A549 (cell line): ENCODE measurements at regions of chr7 and their contacts with region 1.

Region 1: GRCh38 chr7:76201730-76202665 is at the start of gene SRRM3:
- DNase-seq: peak in 1 of 2 experiments; percentile 84
- ATAC-seq: peak; percentile 83 to 89
- H3K4me3 ChIP-seq: peak within 1 kb of the TSS; percentile 42
- H3K27ac ChIP-seq: peak within 1 kb of the TSS; percentile 42 to 80; a peak in 4 of 6 replicates
- H3K4me1 ChIP-seq: 0 out of 3 replicates have a peak, but pooled peaks cover 3% of the 10 kb centered on the region
- CTCF ChIP-seq: peak; percentile 73
- EP300 ChIP-seq: no peak
- POLR2A ChIP-seq: no peak
- RAD21 ChIP-seq: peak in 1 of 2 experiments; percentile 41; a peak in 2 of 5 replicates
- polyA plus RNA-seq, gene SRRM3: 2.4 and 3.0 TPM in 2 replicates

Region 2: GRCh38 chr7:76185187-76185896 is 16.7 kb before region 1 on chr7:
- CTCF ChIA-PET with region 1: interaction called, 27 read pairs
- POLR2A ChIA-PET with region 1: no interaction called
- DNase-seq: no peak
- ATAC-seq: no peak
- H3K4me3 ChIP-seq: no peak overlapping the region
- H3K27ac ChIP-seq: no peak overlapping the region
- H3K4me1 ChIP-seq: no peaks in the 10 kb centered on the region
- CTCF ChIP-seq: no peak
- EP300 ChIP-seq: no peak
- POLR2A ChIP-seq: no peak
- RAD21 ChIP-seq: no peak

Region 3: DNA sequence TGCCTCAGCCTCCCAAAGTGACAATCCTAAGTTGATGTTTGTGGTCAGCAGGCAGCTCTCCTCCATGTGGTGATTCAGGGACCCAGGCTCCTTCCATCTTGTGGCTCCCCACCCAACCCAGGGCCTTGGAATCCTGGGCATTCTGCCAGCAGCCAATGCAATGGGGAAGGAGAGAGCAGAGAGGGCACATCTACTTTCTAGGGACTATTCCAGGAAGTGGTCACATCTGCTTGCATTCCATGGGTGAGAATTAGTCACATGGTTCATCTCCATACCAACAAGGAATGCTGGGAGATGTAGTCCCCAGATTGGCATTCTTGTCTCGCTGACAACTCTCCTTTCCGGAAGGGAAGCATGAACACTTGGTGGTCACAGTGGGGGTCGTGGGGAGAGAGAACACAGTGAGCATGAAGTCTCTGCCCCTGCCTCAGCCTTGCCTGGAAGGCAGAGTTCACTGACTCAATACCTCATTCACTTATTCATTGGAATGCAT is 10.2 kb before region 1 on chr7:
- CTCF ChIA-PET with region 1: interaction called, 27 read pairs
- POLR2A ChIA-PET with region 1: no interaction called
- DNase-seq: peak in 1 of 2 experiments; percentile 76
- ATAC-seq: peak; percentile 47 to 84; a peak in 3 of 6 replicates
- H3K4me3 ChIP-seq: no peak overlapping the region
- H3K27ac ChIP-seq: no peak overlapping the region
- H3K4me1 ChIP-seq: no peaks in the 10 kb centered on the region
- CTCF ChIP-seq: no peak
- EP300 ChIP-seq: no peak
- POLR2A ChIP-seq: no peak
- RAD21 ChIP-seq: no peak

Region 4: GRCh38 chr7:76220185-76221057 is 18.4 kb after region 1 on chr7:
- CTCF ChIA-PET with region 1: interaction called, 15 read pairs
- POLR2A ChIA-PET with region 1: interaction called, 10 read pairs
- DNase-seq: peak in 1 of 2 experiments; percentile 73
- ATAC-seq: peak; percentile 63 to 69
- H3K4me3 ChIP-seq: no peak overlapping the region
- H3K27ac ChIP-seq: peak overlapping the region in 1 of 2 experiments; percentile 35; a peak in 3 of 6 replicates
- H3K4me1 ChIP-seq: peaks cover 12% of the 10 kb centered on the region
- CTCF ChIP-seq: no peak; the same call in 2 of the 3 replicates
- EP300 ChIP-seq: no peak
- POLR2A ChIP-seq: no peak
- RAD21 ChIP-seq: peak; percentile 31 to 56; a peak in 3 of 5 replicates